ENCODE measurements at regions of chr7 and their contacts with region 1.

Region 1: DNA sequence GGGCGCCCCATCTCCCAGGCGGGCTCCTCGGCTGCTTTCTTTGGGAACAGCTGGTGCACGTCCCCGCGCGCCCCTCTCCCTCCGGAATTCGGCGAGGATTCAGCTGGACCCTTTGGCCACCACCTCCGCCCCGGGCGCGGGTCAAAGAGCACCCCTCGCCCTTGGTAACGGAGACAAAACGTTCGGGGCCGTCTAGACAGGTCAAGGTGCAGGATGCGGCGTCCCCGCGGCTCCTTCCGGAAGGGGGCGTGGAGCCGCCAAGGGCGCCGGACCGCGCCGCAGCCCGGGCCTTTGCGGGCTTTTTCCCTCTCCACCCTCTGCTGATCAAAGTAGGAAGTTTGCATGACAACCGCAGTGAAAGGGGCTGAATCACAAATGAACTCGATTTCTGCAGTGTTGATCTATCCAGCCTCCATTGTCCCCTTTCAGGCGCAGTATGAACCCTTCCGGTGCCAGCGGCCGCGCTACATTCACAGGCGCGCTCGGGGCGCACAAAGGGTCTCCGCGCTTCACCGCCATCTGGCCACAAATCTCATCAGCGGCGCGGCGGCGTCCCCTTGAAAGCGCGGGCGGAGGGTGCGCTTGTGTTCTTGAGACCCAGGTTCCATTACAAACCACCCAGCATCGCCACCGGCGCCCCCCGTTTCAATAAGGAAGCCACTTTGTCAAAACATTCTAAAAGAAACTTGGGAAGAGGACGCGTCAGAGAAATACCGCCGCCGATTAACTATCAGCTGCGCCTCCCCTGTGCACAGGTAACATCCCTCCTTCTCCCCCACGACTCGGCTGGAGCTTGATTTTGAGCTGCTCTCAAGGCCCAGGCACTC is 36.4 kb downstream of the CNPY1 start:
- DNase-seq: no peak
- H3K4me3 Mint-ChIP-seq: peak overlapping the region; percentile 47
- H3K27ac Mint-ChIP-seq: no peak overlapping the region
- H3K4me1 Mint-ChIP-seq: peaks cover 16% of the 10 kb centered on the region
- H3K27me3 Mint-ChIP-seq: peaks cover 80% of the 10 kb centered on the region

Region 2: DNA sequence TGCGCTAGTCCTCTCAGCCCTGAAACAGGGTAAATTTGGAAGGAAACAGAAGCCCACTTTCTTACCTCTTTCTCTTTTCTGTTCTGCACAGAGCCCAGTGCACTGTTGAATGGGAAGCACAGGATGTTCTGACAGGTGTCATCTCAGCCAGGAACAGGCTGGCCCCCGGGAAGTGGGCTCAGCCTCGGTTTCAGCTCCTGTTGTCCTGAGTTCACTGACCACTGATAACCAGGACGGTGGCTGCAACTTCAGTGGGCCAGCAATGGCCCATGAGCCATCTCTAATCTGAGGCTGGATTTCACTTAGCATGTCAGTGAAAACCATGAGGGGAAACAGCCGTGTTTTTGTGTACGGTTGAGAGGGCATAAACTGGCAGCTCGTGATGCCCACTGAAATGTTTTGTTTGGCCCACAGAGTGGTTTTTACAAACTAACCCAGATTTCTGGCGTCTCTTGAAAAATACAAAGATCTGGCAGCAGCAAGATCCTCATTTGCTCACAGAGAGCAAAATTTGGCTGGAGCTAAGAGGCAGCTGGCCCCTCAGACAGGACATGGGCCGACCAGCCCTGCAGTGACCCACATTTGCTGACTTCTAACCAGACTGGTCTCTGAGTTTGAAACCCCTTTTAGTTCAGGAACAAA is 962.9 kb before region 1 on chr7:
- intact Hi-C with region 1: no loop called
- DNase-seq: no peak
- H3K4me3 Mint-ChIP-seq: no peak overlapping the region
- H3K27ac Mint-ChIP-seq: no peak overlapping the region
- H3K4me1 Mint-ChIP-seq: no peaks in the 10 kb centered on the region
- H3K27me3 Mint-ChIP-seq: no peaks in the 10 kb centered on the region

Region 3: DNA sequence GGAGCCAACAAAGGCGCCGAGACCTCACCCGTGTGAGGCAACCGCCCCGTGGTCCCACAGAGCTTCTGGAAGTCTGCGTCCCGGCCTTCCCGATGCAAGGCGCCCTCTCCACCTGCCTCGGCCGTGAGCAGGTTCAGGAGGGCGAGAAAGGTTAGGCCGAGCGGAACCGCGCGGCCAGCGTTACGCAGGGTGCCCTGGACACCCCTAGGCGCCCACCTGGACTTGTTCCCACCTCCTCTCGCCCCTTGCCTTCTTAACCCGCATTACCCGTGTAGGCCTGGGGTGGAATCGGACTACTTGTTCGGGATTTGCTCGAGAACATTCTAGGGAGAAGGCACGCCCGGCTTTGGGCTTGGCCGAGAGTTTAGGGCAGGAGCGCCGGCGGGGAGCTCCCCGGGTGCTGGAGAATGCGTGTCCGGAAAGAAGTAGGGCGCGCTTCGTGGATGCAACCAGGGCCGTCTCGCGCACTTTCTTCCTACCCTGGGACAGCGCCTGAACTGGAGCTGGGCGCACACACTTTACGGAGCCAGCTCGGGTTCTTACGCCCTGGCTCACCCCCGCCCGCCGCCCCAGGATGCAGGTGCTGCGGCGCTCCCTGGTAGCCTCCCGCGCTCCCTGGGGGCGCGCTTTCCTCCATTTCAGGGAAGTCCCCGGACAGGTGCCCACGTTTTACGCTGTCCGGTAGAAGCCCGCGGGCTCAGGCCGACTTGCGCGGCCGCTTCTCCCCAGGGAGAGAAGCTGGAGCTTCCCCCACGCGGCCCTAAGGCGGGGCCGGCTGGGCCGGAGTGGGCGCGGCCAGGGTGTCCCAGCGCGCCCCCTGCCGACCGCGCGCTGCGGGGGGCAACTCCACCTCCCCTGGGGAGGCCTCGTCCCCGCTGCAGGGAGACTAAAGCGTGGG is 137.8 kb before region 1 on chr7:
- intact Hi-C with region 1: loop called (anchors 2 kb)
- DNase-seq: no peak
- H3K4me3 Mint-ChIP-seq: no peak overlapping the region
- H3K27ac Mint-ChIP-seq: no peak overlapping the region
- H3K4me1 Mint-ChIP-seq: peaks cover 23% of the 10 kb centered on the region
- H3K27me3 Mint-ChIP-seq: peaks cover 65% of the 10 kb centered on the region

Region 4: DNA sequence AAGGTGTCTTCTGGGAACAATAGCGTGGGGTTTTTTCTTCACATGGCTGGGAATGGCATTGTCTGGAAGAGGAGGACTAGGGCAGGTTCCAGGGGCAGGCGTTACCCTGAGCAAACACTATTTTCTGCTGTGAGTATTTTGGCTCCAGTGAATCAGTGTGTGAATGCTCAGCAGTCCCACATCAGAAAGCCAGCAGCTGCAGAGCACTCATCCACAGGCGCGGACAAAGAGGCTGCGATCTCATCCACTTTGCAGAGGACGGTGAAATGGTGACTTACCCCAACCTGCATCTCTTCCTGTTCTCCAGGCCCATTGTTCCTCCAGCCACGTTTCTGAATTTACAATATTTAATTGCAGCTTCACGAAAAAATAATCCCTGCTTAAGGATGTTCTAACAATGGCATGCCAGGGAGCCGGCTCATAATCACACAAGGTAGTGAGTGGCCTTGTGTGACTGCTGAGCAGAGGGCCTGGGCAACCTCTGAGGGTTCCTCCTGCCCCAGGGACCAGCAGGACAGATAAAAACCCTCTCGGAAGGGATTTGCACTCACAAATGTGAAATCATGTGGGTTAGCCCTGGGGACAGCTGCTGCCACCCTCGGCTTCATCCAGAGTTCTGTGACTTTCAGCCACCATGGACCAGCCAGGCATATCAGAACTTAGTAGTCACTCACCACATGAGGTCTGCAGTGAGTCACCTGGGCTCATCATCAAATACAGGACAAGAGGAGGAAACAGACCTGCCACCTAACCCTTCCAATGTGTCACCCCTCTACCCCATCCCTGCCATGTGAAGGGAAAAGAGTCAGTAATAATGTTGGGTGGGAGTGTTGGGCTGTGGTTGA is 117.0 kb before region 1 on chr7:
- intact Hi-C with region 1: no loop called
- DNase-seq: no peak
- H3K4me3 Mint-ChIP-seq: no peak overlapping the region
- H3K27ac Mint-ChIP-seq: no peak overlapping the region
- H3K4me1 Mint-ChIP-seq: no peaks in the 10 kb centered on the region
- H3K27me3 Mint-ChIP-seq: peaks cover 8% of the 10 kb centered on the region

Region 5: DNA sequence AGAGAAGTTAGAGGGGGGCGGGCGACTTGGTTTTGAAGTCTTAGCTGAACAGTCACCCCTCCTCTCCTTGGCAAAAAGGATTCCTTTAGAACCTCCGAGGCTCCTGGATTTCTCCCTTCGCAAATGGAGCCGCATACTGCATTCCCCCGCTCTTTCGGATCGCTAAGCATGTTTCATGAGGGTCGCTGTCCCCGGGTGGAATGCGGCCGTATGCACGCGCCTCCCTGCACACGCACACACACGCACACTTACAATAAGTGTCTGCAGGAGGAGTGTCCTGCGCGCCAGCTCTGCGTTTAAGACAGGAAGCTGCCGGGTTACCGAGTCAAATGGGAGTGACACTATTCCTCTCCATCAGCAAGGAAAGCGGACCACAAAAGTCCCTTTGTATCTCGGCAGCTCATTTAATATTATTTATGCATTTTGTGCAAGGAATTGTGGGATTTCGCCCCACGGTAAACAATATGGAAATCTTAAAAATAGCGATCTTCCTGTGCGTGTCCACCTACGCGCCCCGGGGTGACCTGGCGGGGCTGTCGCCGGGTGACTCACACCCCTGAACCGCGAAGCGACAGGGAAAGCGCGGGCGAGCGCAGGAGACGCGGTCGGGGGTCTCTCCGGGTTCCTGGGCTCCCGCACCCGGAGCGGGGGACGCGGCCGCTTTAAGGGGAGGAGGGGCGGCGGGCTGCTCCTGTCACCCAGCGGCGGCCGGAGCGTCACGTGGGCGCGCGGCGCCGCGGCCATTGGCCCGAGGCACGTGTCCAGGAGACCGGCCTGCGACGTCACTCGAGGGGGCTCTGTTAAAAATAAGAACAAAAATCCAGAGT is 53.0 kb before region 1 on chr7:
- intact Hi-C with region 1: loop called (anchors 2 kb)
- DNase-seq: no peak
- H3K4me3 Mint-ChIP-seq: peak overlapping the region; percentile 37
- H3K27ac Mint-ChIP-seq: peak overlapping the region; percentile 67
- H3K4me1 Mint-ChIP-seq: peaks cover 9% of the 10 kb centered on the region
- H3K27me3 Mint-ChIP-seq: peaks cover 68% of the 10 kb centered on the region

Region 6: DNA sequence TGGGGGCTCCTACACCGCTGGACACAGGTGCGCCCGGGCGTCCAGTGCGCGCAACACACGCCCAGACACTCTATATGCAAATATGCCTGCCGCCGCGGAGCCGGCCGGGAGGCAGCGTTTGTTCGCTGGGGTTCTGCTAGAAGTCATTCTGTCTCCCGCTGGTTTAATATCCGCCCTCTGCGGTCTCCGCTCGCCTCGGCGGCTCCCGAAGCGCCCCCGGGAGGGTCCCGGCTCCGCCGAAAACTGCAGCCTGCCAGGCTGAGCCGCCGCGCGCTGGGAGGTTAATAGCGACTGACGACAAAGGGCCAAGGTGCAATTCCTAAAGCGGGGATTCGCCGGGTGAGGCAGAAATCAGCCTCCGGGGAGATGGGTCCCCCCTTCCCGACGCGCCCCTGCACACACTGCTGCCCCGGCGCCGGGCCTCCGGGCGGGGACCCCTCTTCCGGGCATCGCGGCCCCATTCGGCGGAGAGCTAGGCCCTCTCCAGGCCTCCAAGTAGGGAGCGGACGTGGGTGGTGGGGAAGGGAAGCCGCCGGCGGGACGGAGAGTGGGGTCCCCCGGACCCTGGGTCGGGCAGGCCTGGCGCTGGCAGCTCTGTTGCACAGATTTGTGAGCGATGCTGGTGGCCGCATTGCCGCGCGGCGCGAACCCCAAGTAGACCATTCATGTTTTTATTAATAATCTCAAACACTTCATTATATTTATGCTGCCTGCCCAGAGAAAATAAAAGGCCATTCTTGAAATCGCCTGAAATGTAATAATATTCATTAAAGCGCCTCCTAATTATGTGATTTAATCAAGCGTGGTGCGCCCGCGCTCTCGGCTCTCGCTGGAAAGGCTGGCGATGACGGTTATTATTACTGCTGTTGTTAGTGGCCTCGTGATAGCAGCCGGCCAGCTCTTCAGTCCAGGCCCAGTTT is 42.9 kb before region 1 on chr7:
- intact Hi-C with region 1: loop called (anchors 1 kb)
- DNase-seq: peak; percentile 38
- H3K4me3 Mint-ChIP-seq: no peak overlapping the region
- H3K27ac Mint-ChIP-seq: no peak overlapping the region
- H3K4me1 Mint-ChIP-seq: peaks cover 3% of the 10 kb centered on the region
- H3K27me3 Mint-ChIP-seq: peaks cover 81% of the 10 kb centered on the region

Region 7: GRCh38 chr7:155490697-155491628 is 19.0 kb before region 1 on chr7:
- intact Hi-C with region 1: no loop called
- DNase-seq: no peak
- H3K4me3 Mint-ChIP-seq: peak overlapping the region; percentile 54
- H3K27ac Mint-ChIP-seq: peak overlapping the region; percentile 42
- H3K4me1 Mint-ChIP-seq: peaks cover 5% of the 10 kb centered on the region
- H3K27me3 Mint-ChIP-seq: peaks cover 40% of the 10 kb centered on the region

Region 8: GRCh38 chr7:155804897-155805825 is 295.2 kb after region 1 on chr7:
- intact Hi-C with region 1: loop called (anchors 2 kb)
- DNase-seq: peak; percentile 51
- H3K4me3 Mint-ChIP-seq: peak overlapping the region; percentile 42
- H3K27ac Mint-ChIP-seq: no peak overlapping the region
- H3K4me1 Mint-ChIP-seq: peaks cover 17% of the 10 kb centered on the region
- H3K27me3 Mint-ChIP-seq: peaks cover 59% of the 10 kb centered on the region